ENCODE measurements at regions of chr7 and their contacts with region 1.

Region 1: GRCh38 chr7:98434095-98434494 is 33.2 kb upstream of the BAIAP2L1 start:
- DNase-seq: no peak
- ATAC-seq: peak in 1 of 2 donors; percentile 29
- H3K4me3 ChIP-seq: no peak overlapping the region
- H3K27ac ChIP-seq: no peak overlapping the region
- H3K4me1 ChIP-seq: no peaks in the 10 kb centered on the region
- H3K27me3 ChIP-seq: no peaks in the 10 kb centered on the region
- CTCF ChIP-seq: no peak

Region 2: DNA sequence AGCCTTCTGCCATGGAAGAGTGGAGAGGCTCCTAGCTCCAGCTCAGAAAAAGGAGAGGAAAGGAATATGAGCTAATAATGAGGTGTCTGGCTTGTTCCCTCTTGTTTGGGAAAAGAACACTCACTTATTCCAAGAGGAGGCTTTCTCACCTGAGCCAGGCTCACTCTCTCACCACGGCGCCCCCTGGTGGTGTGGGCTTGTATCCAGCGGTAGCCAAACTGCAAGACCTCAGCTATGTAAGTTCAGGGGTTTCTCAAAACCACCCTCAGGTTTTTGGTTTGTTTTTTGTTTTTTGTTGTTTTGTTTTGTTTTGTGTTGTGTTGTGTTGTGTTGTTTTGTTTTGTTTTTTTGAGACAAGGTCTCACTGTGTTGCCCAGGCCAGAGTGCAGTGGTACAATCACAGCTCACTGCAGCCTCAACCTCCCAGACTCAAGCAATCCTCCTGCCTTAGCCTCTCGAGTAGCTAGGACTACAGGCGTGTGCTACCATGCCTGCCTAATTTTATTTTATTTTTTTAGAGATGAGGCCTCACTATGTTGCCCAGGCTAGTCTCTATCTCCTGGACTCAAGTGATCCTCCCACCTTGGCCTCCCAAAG is 311.7 kb after region 1 on chr7:
- intact Hi-C with region 1: loop called (anchors 10 kb)
- DNase-seq: peak; percentile 79
- ATAC-seq: peak; percentile 67 to 73
- H3K4me3 ChIP-seq: no peak overlapping the region
- H3K27ac ChIP-seq: no peak overlapping the region
- H3K4me1 ChIP-seq: no peaks in the 10 kb centered on the region
- H3K27me3 ChIP-seq: peaks cover 7% of the 10 kb centered on the region
- CTCF ChIP-seq: peak; percentile 79

Region 3: DNA sequence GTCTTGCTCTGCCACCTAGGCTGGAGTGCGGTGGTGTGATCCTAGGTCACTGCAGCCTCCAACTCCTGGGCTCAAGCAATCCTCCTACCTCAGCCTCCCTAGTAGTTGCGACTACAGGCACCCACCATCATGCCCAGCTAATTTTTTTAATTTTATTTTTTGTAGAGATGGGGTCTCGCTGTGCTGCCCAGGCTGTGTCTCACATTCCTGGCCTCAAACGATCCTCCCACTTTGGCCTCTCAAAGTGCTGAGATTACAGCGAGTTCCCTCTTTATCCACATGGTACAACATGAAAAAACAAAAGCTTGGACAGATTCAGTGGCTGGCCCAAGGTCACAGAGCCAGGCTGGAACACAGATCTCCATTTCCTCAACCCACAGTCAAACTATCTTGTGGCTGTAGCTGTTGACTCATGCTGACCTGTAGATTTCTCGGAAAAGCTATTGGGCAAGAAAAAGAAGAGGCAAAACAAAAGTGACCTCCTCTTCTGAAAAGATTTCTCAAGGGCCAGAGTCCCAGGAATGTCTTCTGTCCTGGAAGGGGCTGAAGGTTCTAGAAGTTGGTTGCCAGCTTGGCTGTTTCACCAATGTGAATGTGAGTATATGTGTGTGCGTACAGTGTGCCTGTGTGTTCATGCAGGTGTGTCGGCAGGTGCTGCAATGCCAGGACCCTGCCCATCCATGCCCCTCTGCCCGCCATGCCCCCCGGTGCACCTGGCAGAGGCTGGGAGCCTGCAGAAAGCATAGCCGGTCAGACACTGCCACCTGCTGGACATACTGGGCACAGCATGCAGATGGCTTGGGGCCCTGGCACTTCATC is 407.3 kb after region 1 on chr7:
- intact Hi-C with region 1: loop called (anchors 10 kb)
- DNase-seq: peak; percentile 75
- ATAC-seq: peak; percentile 81 to 86
- H3K4me3 ChIP-seq: no peak overlapping the region
- H3K27ac ChIP-seq: no peak overlapping the region
- H3K4me1 ChIP-seq: no peaks in the 10 kb centered on the region
- H3K27me3 ChIP-seq: peaks cover 9% of the 10 kb centered on the region
- CTCF ChIP-seq: peak; percentile 99

Measured in lower lobe of right lung (tissue), 2 donors.